ENCODE measurements at regions of chr3 and their contacts with region 1.

Region 1: GRCh38 chr3:54374214-54374855 is 252.0 kb downstream of the CACNA2D3 start:
- DNase-seq: no peak
- ATAC-seq: peak in 3 of 4 donors; percentile 62 to 69 (median 65)
- H3K4me3 ChIP-seq: no peak overlapping the region
- H3K27ac ChIP-seq: no peak overlapping the region
- H3K4me1 ChIP-seq: peaks cover 0 to 17% (median 0%) of the 10 kb centered on the region in 12 donors
- H3K27me3 ChIP-seq: no peaks in the 10 kb centered on the region
- CTCF ChIP-seq: peak in 11 of 12 donors; percentile 23 to 59 (median 43)
- POLR2A ChIP-seq: no peak

Region 2: DNA sequence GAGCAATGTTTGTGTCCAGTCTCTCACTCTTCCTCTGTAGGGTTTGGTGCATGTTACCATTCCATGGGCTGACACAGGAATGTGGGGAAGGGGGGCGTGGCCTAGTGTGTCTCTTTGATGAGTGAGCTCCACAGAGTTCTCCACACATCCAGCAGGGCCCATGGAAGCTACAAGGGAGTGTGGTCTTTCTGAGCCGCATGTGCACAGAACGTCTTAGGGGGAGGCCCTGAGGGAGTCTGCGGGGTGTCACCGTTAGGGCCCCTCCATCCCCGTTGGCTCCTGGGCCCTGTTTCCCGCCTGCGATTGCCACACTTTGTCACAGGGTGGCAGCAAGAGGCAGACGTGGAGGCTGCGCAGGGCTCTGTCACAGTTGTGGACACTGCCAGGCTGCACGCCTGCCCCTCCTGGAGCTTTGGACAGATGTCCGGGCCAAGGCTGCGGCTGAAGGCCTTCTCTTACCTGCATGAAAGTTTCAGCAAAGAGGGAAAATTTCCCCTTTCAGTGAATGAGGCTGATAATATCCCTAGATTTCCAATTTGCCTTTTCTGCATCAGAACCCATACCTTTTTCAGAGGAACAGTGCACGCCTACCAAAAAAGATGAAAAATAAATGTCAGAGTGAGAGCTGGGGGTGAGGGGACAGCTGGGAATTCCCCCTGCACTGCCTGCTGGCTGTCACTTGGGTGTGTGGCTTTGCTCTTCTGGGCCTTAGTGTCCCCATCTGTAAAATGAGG is 227.7 kb before region 1 on chr3:
- intact Hi-C with region 1: loop called (anchors 1 to 10 kb)
- DNase-seq: peak; percentile 37 to 79 (median 56)
- ATAC-seq: peak; percentile 88 to 94 (median 92)
- H3K4me3 ChIP-seq: no peak overlapping the region
- H3K27ac ChIP-seq: no peak overlapping the region
- H3K4me1 ChIP-seq: peaks cover 0 to 10% (median 0%) of the 10 kb centered on the region in 12 donors
- H3K27me3 ChIP-seq: no peaks in the 10 kb centered on the region
- CTCF ChIP-seq: peak; percentile 30 to 70 (median 59)
- POLR2A ChIP-seq: no peak

Region 3: GRCh38 chr3:54153477-54153876 is 220.9 kb before region 1 on chr3:
- intact Hi-C with region 1: loop called in 5 of 10 experiments (anchors 5 to 10 kb)
- DNase-seq: no peak
- ATAC-seq: no peak
- H3K4me3 ChIP-seq: no peak overlapping the region
- H3K27ac ChIP-seq: no peak overlapping the region
- H3K4me1 ChIP-seq: peaks cover 0 to 3% (median 0%) of the 10 kb centered on the region in 12 donors
- H3K27me3 ChIP-seq: no peaks in the 10 kb centered on the region
- CTCF ChIP-seq: no peak
- POLR2A ChIP-seq: no peak